Activated CD8-positive, alpha-beta T cell treated with anti-CD3 and anti-CD28 coated beads for 36 hours (primary cell): ENCODE measurements at regions of chr10 and their contacts with region 1.

Region 1: DNA sequence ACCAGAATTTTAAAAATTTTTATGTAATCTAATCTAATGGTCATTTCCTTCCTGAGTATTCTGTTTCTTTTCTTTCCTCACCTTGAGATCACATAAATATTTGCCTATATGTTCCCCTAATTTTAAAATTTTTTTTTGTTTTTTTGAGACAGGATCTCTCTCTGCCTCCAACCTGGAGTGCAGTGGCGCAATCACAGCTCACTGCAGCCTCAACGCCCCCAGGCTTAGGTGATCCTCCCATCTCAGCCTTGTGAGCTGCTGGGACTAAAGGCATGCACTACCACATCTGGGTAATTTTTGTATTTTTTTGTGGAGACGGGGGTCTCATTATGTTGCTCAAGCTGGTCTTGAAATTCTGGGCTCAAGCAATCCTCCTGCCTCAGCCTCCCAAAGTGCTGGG is 4.1 kb upstream of the PROSER2 start:
- DNase-seq: no peak
- ATAC-seq: no peak
- H3K4me3 Mint-ChIP-seq: no peak overlapping the region
- H3K27ac Mint-ChIP-seq: no peak overlapping the region
- H3K4me1 Mint-ChIP-seq: peaks cover 7% of the 10 kb centered on the region
- H3K27me3 Mint-ChIP-seq: peaks cover 15% of the 10 kb centered on the region
- CTCF ChIP-seq: no peak

Region 2: DNA sequence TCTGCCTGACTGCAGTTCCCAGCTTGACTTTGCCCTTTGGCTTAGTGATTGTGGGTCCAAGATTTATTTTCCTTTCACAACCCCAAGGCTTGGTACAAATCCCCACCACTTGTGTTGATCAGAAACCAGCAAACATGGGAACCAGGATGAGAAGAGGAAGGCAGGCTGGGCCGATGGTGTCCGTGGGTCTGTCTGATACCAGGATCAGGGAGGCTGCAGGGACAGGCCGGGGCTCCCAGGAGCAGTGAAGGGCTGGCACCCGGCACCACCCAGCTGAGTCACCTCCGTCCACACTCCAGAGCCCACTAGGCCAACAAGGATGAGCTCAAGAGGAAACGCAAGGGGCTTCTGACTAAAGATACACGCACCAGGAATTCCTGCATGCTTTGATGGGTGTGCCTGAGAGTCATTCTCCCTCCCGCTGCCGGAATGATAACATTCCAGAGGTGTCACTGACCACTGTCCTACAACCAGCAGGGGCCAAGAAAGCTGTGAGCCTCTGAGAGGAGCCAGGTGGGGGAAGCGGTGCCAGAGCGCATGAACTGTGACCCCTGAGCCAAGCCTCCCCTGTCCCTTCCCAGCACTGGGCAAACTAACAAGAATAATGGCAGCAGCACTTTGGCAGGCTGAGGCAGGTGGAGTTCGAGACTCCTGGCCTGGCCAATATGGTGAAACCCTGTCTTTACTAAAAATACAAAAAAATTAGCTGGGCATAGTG is 25.1 kb before region 1 on chr10:
- CTCF ChIA-PET with region 1: interaction called, 10 read pairs
- POLR2A ChIA-PET with region 1: interaction called, 5 read pairs
- intact Hi-C with region 1: no loop called
- DNase-seq: no peak
- ATAC-seq: no peak
- H3K4me3 Mint-ChIP-seq: no peak overlapping the region
- H3K27ac Mint-ChIP-seq: no peak overlapping the region
- H3K4me1 Mint-ChIP-seq: no peaks in the 10 kb centered on the region
- H3K27me3 Mint-ChIP-seq: peaks cover 3% of the 10 kb centered on the region
- CTCF ChIP-seq: no peak

Region 3: GRCh38 chr10:11845113-11845512 is 26.1 kb after region 1 on chr10:
- CTCF ChIA-PET with region 1: interaction called, 10 read pairs
- POLR2A ChIA-PET with region 1: no interaction called
- intact Hi-C with region 1: no loop called
- DNase-seq: peak; percentile 12
- ATAC-seq: no peak
- H3K4me3 Mint-ChIP-seq: no peak overlapping the region
- H3K27ac Mint-ChIP-seq: no peak overlapping the region
- H3K4me1 Mint-ChIP-seq: peaks cover 16% of the 10 kb centered on the region
- H3K27me3 Mint-ChIP-seq: peaks cover 27% of the 10 kb centered on the region
- CTCF ChIP-seq: no peak